Activated T-helper 2 cell treated with anti-CD3 and anti-CD28 coated beads, Interferon-gamma antibody, Interleukin-2, Interleukin-4, amounts not matched to agents 10 μg/mL and 5 μg/mL and 100 μg/mL, durations not matched to agents 14 hours and 24 hours and 36 hours (primary cell): ENCODE measurements at regions of chr13 and their contacts with region 1.

Region 1: GRCh38 chr13:98598043-98598442 is 21.1 kb upstream of the STK24 start:
- DNase-seq: no peak
- H3K4me3 Mint-ChIP-seq: no peak overlapping the region
- H3K27ac Mint-ChIP-seq: no peak overlapping the region
- H3K4me1 Mint-ChIP-seq: peaks cover 18% of the 10 kb centered on the region
- H3K27me3 Mint-ChIP-seq: peaks cover 2% of the 10 kb centered on the region

Region 2: DNA sequence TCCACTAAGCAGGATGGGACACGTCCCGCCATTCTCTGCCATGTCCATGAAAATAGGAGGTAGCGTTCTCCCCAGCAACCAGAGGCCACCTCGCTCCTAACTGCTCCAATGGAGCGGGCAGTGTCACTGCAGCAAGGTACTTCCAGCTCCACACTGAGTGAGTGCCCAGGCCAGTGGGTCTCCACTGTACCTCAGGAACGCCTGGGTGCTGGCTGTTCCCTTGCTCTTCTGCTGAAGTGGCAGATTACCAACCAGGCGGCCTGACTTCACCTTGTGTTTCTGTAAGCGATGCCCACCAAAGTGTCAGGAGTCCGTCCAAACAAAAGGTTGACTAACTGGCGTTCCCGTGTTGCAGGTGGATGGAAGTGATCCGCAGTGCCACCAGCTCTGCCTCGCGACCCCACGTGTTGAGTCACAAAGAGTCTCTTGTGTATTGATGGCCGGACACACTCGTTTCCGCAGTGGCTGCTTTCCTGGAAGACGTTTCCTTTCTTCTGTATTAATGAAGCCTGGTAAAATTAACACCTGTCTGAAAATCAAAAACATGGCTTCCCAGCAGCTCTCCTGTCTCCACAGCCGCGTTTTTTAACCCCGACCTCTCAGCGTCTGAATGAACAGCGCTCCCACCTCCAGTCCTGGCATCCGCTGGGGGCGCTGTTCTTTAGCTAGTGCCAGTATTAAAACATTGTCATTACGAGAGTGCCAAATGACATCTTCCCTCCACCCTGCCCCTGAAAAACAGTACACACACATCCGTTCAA is 150.0 kb before region 1 on chr13:
- intact Hi-C with region 1: no loop called
- DNase-seq: no peak
- H3K4me3 Mint-ChIP-seq: no peak overlapping the region
- H3K27ac Mint-ChIP-seq: no peak overlapping the region
- H3K4me1 Mint-ChIP-seq: peaks cover 20% of the 10 kb centered on the region
- H3K27me3 Mint-ChIP-seq: no peaks in the 10 kb centered on the region

Region 3: DNA sequence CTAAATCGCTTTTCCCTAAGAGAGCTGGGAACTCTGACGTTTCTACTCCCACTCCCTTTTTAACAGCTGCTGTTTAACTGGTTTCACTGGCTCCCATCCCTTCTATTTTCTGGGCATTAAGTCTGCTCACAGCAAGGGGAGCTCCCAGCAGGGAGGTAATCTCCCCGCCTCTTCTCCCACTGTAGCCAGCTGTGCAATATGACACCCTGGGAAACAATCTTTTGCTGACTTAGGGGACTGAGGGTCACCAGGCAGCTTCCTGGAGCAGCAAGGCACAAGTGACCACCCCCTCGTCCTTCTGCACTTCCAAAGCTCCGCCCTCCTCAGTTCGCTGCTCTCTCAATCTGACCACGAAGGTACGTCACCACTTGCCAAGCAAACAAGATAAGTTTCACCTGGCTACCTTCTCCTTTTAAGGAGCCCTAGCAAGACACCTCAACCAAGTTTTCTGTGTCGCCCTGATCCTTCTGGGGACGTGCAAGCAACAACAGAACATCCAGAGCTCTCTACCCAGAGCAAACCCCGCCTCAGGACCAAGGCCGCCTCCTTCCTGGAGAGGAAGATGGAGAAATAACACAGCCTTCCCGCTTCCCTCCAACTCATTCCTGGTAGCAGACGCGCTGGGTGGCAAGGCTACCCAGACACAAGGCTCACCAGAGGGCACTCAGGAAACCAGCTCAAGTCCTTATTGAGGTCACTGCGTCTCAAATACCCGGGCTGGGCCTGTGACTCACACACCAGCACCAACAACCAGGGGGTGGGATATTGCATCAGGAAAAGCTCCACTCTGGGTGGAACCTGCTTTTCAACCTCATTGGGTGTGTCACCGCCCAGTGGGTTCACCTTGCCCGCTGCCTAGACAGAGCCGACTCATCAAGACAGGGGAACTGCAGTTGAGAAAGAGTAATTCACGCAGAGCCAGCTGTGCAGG is 113.5 kb before region 1 on chr13:
- intact Hi-C with region 1: no loop called
- DNase-seq: no peak
- H3K4me3 Mint-ChIP-seq: peak overlapping the region; percentile 27
- H3K27ac Mint-ChIP-seq: peak overlapping the region; percentile 65
- H3K4me1 Mint-ChIP-seq: peaks cover 59% of the 10 kb centered on the region
- H3K27me3 Mint-ChIP-seq: no peaks in the 10 kb centered on the region

Region 4: DNA sequence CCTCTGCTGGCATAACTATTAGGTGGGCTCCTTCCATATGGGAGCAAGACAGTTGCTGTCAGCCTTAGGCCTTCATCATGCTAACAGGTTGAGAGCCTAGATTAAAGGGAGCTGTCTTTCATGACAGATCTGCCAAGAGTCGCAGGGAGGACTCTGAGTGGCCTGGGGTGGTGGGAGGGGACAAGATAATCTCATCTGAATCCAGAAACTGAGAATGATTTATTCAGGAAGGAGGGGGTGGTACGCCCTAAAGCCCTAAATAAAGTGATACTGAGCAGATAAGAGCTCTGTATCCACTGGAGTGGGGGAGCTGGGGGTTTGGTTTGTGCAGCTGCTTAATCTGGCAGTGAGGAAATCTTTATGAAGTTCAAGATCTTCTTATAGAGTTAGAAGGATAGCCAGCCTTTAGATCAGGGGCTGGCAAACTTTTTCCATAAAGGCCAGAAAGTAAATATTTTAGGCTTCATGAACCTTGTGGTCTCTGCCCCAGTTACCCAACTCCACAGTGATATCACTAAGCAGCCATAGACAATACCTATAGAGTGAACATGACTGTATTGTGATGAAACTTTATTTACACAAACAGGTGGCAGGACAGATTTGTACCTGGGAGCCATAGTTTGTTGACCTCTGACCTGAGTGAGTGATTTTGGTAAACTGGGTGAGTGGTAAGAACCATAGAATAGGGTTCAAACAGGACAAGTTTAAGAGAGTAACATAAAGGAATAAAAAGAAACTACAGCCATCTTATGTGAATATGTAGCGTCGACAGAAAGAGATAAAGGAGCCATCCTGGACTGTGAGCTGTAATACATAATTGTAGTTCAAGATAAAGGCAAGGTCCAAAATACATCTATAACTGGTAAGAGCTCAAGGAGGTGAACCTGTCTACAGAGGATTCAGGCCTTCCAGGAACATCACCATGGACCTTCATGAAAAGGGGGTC is 11.4 kb before region 1 on chr13:
- intact Hi-C with region 1: loop called (anchors 1 kb)
- DNase-seq: no peak
- H3K4me3 Mint-ChIP-seq: no peak overlapping the region
- H3K27ac Mint-ChIP-seq: no peak overlapping the region
- H3K4me1 Mint-ChIP-seq: peaks cover 22% of the 10 kb centered on the region
- H3K27me3 Mint-ChIP-seq: peaks cover 1% of the 10 kb centered on the region

Region 5: GRCh38 chr13:98664039-98664438 is 66.0 kb after region 1 on chr13:
- intact Hi-C with region 1: loop called (anchors 1 kb)
- DNase-seq: peak; percentile 18
- H3K4me3 Mint-ChIP-seq: no peak overlapping the region
- H3K27ac Mint-ChIP-seq: peak overlapping the region; percentile 58
- H3K4me1 Mint-ChIP-seq: peaks cover 18% of the 10 kb centered on the region
- H3K27me3 Mint-ChIP-seq: peaks cover 27% of the 10 kb centered on the region